ENCODE measurements at regions of chr9 and their contacts with region 1.

Region 1: GRCh38 chr9:25864509-25864908 is 186.3 kb upstream of the TUSC1 start:
- DNase-seq: peak; percentile 90
- H3K4me3 ChIP-seq: peak overlapping the region in 1 of 3 experiments; percentile 6
- H3K27ac ChIP-seq: peak overlapping the region; percentile 87
- H3K4me1 ChIP-seq: peaks cover 24% of the 10 kb centered on the region
- H3K27me3 ChIP-seq: no peaks in the 10 kb centered on the region
- CTCF ChIP-seq: no peak
- POLR2A ChIP-seq: peak; percentile 41

Region 2: GRCh38 chr9:26012797-26013594 is 148.5 kb after region 1 on chr9:
- CTCF ChIA-PET with region 1: no interaction called
- POLR2A ChIA-PET with region 1: no interaction called
- dilution Hi-C with region 1: no loop called
- intact Hi-C with region 1: no loop called
- DNase-seq: no peak
- H3K4me3 ChIP-seq: no peak overlapping the region
- H3K27ac ChIP-seq: no peak overlapping the region
- H3K4me1 ChIP-seq: no peaks in the 10 kb centered on the region
- H3K27me3 ChIP-seq: no peaks in the 10 kb centered on the region
- CTCF ChIP-seq: no peak
- POLR2A ChIP-seq: no peak

Region 3: DNA sequence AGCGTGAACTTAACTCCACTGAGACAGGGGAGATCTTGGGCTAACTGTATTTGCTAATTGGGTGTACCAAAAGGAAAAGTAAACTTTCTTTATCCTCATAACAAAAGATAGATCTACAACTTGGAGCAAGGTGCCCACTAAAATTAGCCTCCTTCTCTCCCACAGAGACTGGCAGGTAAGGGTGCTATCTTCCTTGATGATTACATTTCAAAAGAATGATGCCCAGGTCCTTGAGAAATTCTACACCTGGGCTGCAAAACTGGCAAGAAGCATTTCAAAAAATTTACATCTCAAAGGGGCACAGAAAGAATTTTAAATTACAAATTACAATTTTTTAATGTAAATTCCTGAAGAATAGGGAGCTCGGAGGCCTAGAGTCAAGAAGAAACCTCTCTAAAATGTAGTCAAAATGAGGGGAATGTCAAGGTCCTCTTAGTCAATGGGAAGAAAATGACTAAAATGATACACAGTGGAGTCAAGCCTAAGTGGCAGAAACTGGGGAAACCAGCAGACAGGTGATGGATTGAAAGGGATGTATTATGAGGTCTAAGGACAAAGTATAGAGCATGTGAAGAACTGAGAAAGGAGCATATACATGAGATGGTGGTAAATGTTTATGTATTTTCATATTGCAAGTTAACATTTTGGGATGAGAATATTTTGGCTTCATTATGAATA is 162.1 kb after region 1 on chr9:
- CTCF ChIA-PET with region 1: no interaction called
- POLR2A ChIA-PET with region 1: no interaction called
- dilution Hi-C with region 1: no loop called
- intact Hi-C with region 1: no loop called
- DNase-seq: no peak
- H3K4me3 ChIP-seq: no peak overlapping the region
- H3K27ac ChIP-seq: no peak overlapping the region
- H3K4me1 ChIP-seq: no peaks in the 10 kb centered on the region
- H3K27me3 ChIP-seq: no peaks in the 10 kb centered on the region
- CTCF ChIP-seq: no peak
- POLR2A ChIP-seq: no peak

Region 4: GRCh38 chr9:26955921-26956859 is 1091.7 kb after region 1 on chr9 and contains the start of gene IFT74:
- CTCF ChIA-PET with region 1: no interaction called
- POLR2A ChIA-PET with region 1: no interaction called
- dilution Hi-C with region 1: no loop called
- intact Hi-C with region 1: loop called (anchors 5 kb)
- DNase-seq: peak; percentile 98
- H3K4me3 ChIP-seq: peak within 1 kb of the TSS; percentile 46 to 85 (median 68)
- H3K27ac ChIP-seq: peak within 1 kb of the TSS; percentile 76
- H3K4me1 ChIP-seq: peaks cover 14% of the 10 kb centered on the region
- H3K27me3 ChIP-seq: no peaks in the 10 kb centered on the region
- CTCF ChIP-seq: no peak
- POLR2A ChIP-seq: peak; percentile 81
- total RNA-seq, gene IFT74: 7.8 and 10.8 TPM in 2 replicates